ENCODE measurements at regions of chr9 and their contacts with region 1.

Region 1: GRCh38 chr9:98654247-98654646 is 54.5 kb downstream of the GABBR2 start:
- DNase-seq: no peak
- ATAC-seq: no peak
- H3K4me3 ChIP-seq: no peak overlapping the region
- H3K27ac ChIP-seq: no peak overlapping the region
- H3K4me1 ChIP-seq: no peaks in the 10 kb centered on the region
- H3K27me3 ChIP-seq: peaks cover 0 to 6% (median 0%) of the 10 kb centered on the region in 9 donors
- CTCF ChIP-seq: no peak
- POLR2A ChIP-seq: no peak

Region 2: GRCh38 chr9:98518556-98518955 is 135.7 kb before region 1 on chr9:
- intact Hi-C with region 1: loop called in 1 of 10 experiments (anchors 5 kb)
- DNase-seq: no peak
- ATAC-seq: no peak
- H3K4me3 ChIP-seq: no peak overlapping the region
- H3K27ac ChIP-seq: no peak overlapping the region
- H3K4me1 ChIP-seq: no peaks in the 10 kb centered on the region
- H3K27me3 ChIP-seq: peaks cover 0 to 13% (median 0%) of the 10 kb centered on the region in 9 donors
- CTCF ChIP-seq: no peak
- POLR2A ChIP-seq: no peak

Measured in heart left ventricle (tissue), 16 donors.